B cell (primary cell): ENCODE measurements at regions of chr2 and their contacts with region 1.

Region 1: DNA sequence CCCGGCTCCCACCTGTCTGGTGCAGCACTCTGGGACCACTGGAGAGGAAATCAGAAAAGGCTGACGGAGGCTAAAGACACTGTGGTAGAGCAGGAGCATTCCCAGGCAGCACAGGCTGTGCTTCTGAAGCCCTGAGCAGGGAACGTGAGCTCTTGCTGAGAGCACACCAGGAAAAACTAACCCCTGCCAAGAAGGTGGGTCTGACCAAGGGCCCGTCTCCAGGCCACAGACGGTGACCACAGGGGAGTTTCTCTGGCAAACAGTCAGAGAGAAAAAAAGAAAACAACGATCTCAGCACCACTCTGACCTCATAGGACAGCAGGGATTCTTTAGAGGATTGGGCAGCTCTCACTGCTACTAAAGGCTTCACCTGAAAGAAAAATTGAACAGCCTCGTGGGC is 201.4 kb downstream of the AFF3 start:
- DNase-seq: no peak
- ATAC-seq: no peak
- H3K4me3 ChIP-seq: no peak overlapping the region
- H3K4me3 Mint-ChIP-seq: no peak overlapping the region
- H3K27ac ChIP-seq: no peak overlapping the region
- H3K27ac Mint-ChIP-seq: no peak overlapping the region
- H3K4me1 ChIP-seq: peaks cover 0 to 11% of the 10 kb centered on the region in 2 donors
- H3K4me1 Mint-ChIP-seq: peaks cover 19% of the 10 kb centered on the region
- H3K27me3 ChIP-seq: no peaks in the 10 kb centered on the region
- H3K27me3 Mint-ChIP-seq: no peaks in the 10 kb centered on the region
- CTCF ChIP-seq: no peak

Region 2: DNA sequence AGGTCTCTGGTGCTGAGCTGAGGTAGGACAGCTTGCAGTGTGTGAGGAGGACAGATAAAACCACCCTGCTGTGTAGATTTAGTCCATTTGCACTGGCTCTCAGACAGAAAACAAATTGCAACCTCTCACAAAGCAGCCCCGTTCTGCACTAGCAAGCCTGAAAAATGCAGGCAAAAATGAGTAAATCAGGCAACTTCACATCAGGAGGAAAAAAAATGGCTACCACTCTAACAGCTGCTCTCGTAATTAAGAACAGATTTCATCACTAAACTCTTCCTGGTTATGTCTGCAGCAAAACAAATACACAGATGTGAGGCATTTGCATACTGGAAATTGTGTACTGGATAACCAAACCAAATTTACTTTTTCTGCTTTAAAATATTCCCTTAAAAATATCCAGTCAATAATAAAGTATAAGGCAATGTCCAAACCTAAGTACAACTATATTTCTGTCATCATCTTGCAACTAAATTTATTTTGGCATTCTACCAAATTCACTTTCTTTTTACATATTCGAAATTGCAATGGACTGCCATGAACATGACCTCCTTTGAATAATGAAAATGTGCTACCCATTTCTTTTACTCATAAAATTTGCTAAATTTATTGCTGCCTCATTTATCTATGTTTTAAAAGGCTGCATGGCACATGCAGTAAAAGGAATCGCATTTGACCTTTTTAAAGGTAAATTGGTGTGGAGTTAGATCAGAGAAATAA is 44.0 kb after region 1 on chr2:
- CTCF ChIA-PET with region 1: no interaction called
- POLR2A ChIA-PET with region 1: no interaction called
- intact Hi-C with region 1: no loop called
- DNase-seq: no peak
- ATAC-seq: no peak
- H3K4me3 ChIP-seq: no peak overlapping the region
- H3K4me3 Mint-ChIP-seq: no peak overlapping the region
- H3K27ac ChIP-seq: no peak overlapping the region
- H3K27ac Mint-ChIP-seq: peak overlapping the region; percentile 26
- H3K4me1 ChIP-seq: no peaks in the 10 kb centered on the region
- H3K4me1 Mint-ChIP-seq: peaks cover 4% of the 10 kb centered on the region
- H3K27me3 ChIP-seq: no peaks in the 10 kb centered on the region
- H3K27me3 Mint-ChIP-seq: no peaks in the 10 kb centered on the region
- CTCF ChIP-seq: no peak

Region 3: GRCh38 chr2:100163605-100164004 is 222.6 kb after region 1 on chr2:
- CTCF ChIA-PET with region 1: no interaction called
- POLR2A ChIA-PET with region 1: no interaction called
- intact Hi-C with region 1: no loop called
- DNase-seq: no peak
- ATAC-seq: no peak
- H3K4me3 ChIP-seq: no peak overlapping the region
- H3K4me3 Mint-ChIP-seq: no peak overlapping the region
- H3K27ac ChIP-seq: no peak overlapping the region
- H3K27ac Mint-ChIP-seq: no peak overlapping the region
- H3K4me1 ChIP-seq: no peaks in the 10 kb centered on the region
- H3K4me1 Mint-ChIP-seq: no peaks in the 10 kb centered on the region
- H3K27me3 ChIP-seq: no peaks in the 10 kb centered on the region
- H3K27me3 Mint-ChIP-seq: no peaks in the 10 kb centered on the region
- CTCF ChIP-seq: no peak

Region 4: GRCh38 chr2:100548771-100549170 is 607.8 kb after region 1 on chr2:
- CTCF ChIA-PET with region 1: no interaction called
- POLR2A ChIA-PET with region 1: interaction called, 10 read pairs
- intact Hi-C with region 1: no loop called
- DNase-seq: no peak
- ATAC-seq: no peak
- H3K4me3 ChIP-seq: no peak overlapping the region
- H3K4me3 Mint-ChIP-seq: no peak overlapping the region
- H3K27ac ChIP-seq: no peak overlapping the region
- H3K27ac Mint-ChIP-seq: no peak overlapping the region
- H3K4me1 ChIP-seq: no peaks in the 10 kb centered on the region
- H3K4me1 Mint-ChIP-seq: no peaks in the 10 kb centered on the region
- H3K27me3 ChIP-seq: peaks cover 0 to 9% (median 0%) of the 10 kb centered on the region in 4 experiments
- H3K27me3 Mint-ChIP-seq: peaks cover 33% of the 10 kb centered on the region
- CTCF ChIP-seq: no peak